IMR-90 (cell line): ENCODE measurements at regions of chr9 and their contacts with region 1.

Region 1: DNA sequence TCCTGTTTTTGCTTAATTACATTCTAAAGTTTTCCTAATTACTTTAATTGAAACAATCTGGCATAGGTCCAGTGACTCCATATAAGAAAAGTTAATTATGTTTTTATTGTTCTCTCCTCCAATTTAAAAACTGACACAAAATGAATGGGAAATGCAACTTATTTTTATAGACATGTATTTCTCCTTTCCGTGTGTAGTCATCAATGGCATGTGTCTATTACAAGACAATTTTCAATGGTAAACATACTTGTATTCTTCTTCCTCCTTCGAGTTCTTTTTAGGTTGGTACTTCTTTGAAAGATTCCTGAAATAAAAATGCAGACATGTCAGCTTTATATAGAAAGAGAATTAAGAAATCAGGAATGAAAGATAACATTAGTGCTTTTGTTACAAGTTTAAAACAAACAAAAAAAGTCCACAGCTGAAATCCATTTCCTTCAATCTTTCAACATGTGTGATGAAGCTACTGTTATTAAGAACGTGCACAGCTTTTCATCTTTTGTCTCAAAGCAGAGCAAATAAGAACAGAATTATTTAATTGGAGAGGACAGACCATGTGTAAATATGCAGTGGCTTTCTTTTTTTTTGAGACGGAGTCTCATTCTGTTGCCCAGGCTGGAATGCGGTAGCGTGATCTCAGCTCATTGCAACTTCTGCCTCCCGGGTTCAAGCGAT is 63.8 kb downstream of the FNBP1 start:
- DNase-seq: no peak
- ATAC-seq: no peak
- H3K4me3 ChIP-seq: no peak overlapping the region
- H3K27ac ChIP-seq: no peak overlapping the region
- H3K4me1 ChIP-seq: no peaks in the 10 kb centered on the region
- H3K27me3 ChIP-seq: no peaks in the 10 kb centered on the region
- CTCF ChIP-seq: no peak
- POLR2A ChIP-seq: no peak
- RAD21 ChIP-seq: no peak

Region 2: DNA sequence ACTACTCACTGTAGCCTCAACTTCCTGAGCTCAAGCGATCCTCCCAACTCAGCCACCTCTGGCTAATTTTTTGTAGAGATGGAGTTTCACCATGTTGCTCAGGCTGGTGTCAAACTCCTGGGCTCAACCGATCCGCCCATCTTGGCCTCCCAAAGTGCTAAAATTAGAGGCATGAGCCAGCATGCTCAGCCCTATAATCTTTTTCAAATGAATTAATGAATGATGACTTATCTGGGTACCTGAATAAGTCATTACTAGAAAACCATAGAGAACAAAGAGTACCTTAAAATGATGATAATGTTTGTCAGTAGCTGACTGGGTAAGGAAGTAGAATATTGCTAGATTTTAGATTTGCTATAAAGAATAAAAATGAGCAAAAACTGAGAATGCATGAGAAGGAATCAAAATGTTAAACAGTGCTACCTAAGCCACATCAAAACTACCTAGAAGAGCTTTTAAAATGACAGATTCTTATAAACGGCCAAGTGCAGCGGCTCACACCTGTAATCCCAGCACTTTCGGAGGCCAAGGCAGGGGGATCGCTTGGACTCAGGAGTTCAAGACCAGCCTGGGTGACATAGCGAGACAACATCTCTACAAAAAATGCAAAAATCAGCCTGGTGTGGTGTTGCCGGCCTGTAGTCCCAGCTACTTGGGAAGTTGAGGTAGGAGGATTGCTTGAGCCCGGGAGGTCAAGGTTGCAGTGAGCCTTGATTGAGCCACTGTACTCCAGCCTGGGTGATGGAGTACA is 50.2 kb after region 1 on chr9:
- CTCF ChIA-PET with region 1: no interaction called
- POLR2A ChIA-PET with region 1: no interaction called
- dilution Hi-C with region 1: no loop called
- in situ Hi-C with region 1: no loop called
- intact Hi-C with region 1: loop called (anchors 5 kb)
- DNase-seq: no peak
- ATAC-seq: no peak
- H3K4me3 ChIP-seq: no peak overlapping the region
- H3K27ac ChIP-seq: no peak overlapping the region
- H3K4me1 ChIP-seq: no peaks in the 10 kb centered on the region; the same call in 1 of the 2 replicates
- H3K27me3 ChIP-seq: no peaks in the 10 kb centered on the region
- CTCF ChIP-seq: no peak
- POLR2A ChIP-seq: no peak
- RAD21 ChIP-seq: no peak